ENCODE measurements at regions of chr6 and their contacts with region 1.

Region 1: DNA sequence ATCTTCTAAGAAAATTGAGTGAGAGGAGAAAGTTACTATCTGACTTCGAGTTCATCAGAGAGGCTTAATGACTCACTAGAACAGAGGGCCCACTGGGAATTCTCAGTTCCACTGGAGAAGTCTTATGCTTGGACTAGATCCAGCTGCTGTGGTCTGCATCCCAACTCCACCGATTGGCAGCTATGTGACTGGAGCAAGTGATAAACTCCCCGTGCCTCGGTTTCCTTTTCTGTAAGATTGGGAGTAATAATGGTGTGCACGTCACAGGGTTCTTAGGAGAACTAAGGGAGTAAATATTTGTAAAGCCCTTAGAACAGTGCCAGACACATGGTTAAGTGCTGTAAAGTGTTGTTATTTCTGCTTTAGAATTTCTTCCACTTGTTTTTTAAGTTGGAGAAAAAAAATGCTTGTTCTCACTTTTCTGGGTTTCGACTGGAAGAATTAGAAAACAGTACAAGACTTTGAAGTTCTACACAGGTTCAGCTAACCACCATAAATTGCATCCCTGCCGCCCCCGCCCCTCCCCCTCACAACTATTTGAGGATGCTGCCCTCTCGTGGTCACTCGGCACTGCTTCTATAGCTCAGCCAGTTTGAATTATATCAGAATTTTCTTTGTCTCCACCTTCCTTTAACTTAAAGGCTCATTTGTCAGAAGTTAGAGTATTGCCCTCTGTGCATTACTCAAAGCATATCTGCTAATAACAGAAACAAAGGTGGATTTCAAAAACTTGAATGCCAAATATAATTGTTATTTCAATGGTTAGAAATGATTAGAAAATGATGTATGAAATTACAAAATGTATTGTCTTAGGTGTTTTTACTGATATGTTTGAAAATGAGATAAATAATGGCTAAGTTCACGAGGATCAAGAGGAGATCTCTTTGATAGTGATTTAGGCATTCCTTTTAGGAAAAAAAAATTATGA is 95.0 kb upstream of the IFNGR1 start:
- DNase-seq: peak; percentile 82
- ATAC-seq: peak; percentile 93

Region 2: GRCh38 chr6:137369136-137369535 is 54.9 kb after region 1 on chr6:
- intact Hi-C with region 1: loop called (anchors 2 kb)
- DNase-seq: no peak
- ATAC-seq: no peak

Region 3: GRCh38 chr6:137846772-137847313 is 532.7 kb after region 1 on chr6:
- intact Hi-C with region 1: no loop called
- DNase-seq: peak; percentile 67
- ATAC-seq: peak; percentile 90

Region 4: DNA sequence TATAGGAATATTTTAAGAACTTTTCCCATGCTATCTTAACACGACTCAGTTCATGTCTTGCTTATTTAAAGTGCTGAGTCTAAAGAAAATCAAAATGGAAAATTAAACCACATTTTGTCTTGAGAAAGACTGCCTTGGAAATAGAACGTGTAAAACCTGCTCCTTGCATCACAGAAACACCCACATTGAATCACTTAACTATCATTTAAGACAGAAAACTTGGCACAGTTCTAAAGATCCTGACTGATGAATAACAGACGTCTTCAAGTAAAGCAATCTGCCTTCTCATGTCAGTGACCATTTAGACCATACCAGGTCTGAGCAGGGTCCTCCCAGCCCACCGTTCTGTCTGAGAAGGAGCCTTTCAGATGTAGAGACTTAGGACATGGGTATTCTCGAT is 785.6 kb after region 1 on chr6:
- intact Hi-C with region 1: no loop called
- DNase-seq: no peak
- ATAC-seq: peak; percentile 84